ENCODE measurements at regions of chr11 and their contacts with region 1.

Region 1: DNA sequence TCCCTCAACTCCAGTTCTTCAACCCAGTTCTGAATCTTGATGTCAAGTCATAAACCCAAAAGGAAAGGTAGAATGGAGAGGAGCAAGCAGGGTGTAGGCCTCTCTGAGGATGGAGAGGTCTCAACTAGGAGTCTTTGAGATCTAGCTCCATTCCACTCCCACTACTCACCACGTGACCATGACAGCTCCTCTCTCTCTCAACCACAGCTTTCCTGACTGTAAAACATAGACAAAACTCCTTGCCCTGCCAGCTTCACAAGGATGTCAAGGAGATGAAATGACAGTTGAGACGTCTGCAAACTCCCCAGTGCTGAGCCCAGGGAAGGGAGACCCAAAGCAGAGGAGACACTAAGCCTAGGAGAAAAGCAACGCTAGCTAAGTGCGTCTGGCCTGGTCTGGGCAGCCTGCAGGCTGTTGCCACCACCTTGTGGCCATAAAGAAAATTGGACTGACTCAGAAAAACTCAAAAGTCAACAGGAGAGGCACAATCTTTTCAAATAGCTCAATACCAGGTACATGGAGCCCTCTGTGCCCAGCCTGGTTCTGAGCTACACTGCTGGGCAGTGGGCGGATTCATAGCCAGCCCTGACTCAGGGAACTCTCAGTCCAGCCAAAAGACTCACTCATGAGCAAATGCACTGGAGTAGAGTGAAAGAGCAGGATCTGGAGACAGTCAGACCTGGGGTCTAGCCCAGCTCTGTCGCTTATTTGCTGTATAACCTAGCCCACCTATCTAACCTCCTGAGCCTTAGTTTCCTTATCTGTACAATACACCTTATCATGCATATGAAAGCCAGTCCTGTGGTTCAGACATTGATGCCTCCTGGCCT is 3.4 kb downstream of the CLPB start:
- DNase-seq: peak in 4 of 5 donors; percentile 30 to 46 (median 40)
- H3K4me3 ChIP-seq: no peak overlapping the region
- H3K4me3 Mint-ChIP-seq: peak overlapping the region in 7 of 8 donors; percentile 0 to 74 (median 28)
- H3K27ac ChIP-seq: no peak overlapping the region
- H3K27ac Mint-ChIP-seq: peak overlapping the region in 5 of 7 donors; percentile 28 to 64 (median 46)
- H3K4me1 ChIP-seq: peaks cover 26% of the 10 kb centered on the region
- H3K4me1 Mint-ChIP-seq: peaks cover 17 to 42% (median 35%) of the 10 kb centered on the region in 4 donors
- H3K27me3 ChIP-seq: no peaks in the 10 kb centered on the region
- H3K27me3 Mint-ChIP-seq: peaks cover 0 to 1% of the 10 kb centered on the region in 2 donors

Region 2: GRCh38 chr11:71787098-71787823 is 643.7 kb before region 1 on chr11:
- CTCF ChIA-PET with region 1: no interaction called
- POLR2A ChIA-PET with region 1: no interaction called
- intact Hi-C with region 1: loop called (anchors 5 kb)
- DNase-seq: peak; percentile 89 to 97 (median 95)
- H3K4me3 ChIP-seq: peak overlapping the region in 1 of 2 donors; percentile 91
- H3K4me3 Mint-ChIP-seq: peak overlapping the region; percentile 93 to 99 (median 96)
- H3K27ac ChIP-seq: peak overlapping the region; percentile 65
- H3K27ac Mint-ChIP-seq: peak overlapping the region; percentile 87 to 100 (median 99)
- H3K4me1 ChIP-seq: peaks cover 3% of the 10 kb centered on the region
- H3K4me1 Mint-ChIP-seq: peaks cover 10 to 18% (median 13%) of the 10 kb centered on the region in 4 donors
- H3K27me3 ChIP-seq: no peaks in the 10 kb centered on the region
- H3K27me3 Mint-ChIP-seq: no peaks in the 10 kb centered on the region

Region 3: DNA sequence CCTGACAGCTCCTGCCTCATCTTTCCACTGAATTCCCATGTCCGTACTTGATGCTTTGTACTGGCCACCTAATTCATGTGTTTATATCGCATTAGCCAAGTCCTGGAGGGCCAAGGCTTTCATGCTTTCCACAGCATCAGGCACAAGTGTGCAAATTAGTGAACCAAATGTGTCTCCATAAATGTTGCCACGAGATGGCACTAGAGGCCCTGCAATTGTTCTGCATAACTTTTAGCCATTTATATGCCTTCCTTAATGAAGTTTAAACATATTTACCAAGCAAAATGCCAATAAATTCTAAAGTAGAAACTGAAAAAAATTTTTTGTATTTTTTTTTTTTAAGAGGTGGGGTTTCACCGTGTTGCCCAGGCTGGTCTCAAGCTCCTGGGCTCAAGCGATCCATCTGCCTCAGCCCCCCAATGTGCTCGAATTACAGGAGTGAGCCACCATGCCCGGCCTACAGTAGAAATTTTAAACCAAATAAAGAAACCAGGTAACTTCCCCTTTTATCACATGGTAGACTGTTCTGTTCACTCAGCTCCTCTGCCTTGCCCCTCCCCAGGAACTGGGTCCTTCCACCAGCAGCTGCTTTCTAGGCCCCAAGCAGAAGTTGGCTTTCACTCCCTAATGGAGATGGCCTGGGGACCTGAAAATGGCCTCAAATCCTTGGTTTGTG is 453.1 kb before region 1 on chr11:
- CTCF ChIA-PET with region 1: interaction called, 14 read pairs
- POLR2A ChIA-PET with region 1: no interaction called
- intact Hi-C with region 1: loop called (anchors 1 kb)
- DNase-seq: peak in 4 of 5 donors; percentile 33 to 47 (median 44)
- H3K4me3 ChIP-seq: no peak overlapping the region
- H3K4me3 Mint-ChIP-seq: no peak overlapping the region
- H3K27ac ChIP-seq: no peak overlapping the region
- H3K27ac Mint-ChIP-seq: peak overlapping the region in 1 of 7 donors; percentile 77
- H3K4me1 ChIP-seq: no peaks in the 10 kb centered on the region
- H3K4me1 Mint-ChIP-seq: peaks cover 0 to 5% (median 3%) of the 10 kb centered on the region in 4 donors
- H3K27me3 ChIP-seq: no peaks in the 10 kb centered on the region
- H3K27me3 Mint-ChIP-seq: no peaks in the 10 kb centered on the region

Region 4: DNA sequence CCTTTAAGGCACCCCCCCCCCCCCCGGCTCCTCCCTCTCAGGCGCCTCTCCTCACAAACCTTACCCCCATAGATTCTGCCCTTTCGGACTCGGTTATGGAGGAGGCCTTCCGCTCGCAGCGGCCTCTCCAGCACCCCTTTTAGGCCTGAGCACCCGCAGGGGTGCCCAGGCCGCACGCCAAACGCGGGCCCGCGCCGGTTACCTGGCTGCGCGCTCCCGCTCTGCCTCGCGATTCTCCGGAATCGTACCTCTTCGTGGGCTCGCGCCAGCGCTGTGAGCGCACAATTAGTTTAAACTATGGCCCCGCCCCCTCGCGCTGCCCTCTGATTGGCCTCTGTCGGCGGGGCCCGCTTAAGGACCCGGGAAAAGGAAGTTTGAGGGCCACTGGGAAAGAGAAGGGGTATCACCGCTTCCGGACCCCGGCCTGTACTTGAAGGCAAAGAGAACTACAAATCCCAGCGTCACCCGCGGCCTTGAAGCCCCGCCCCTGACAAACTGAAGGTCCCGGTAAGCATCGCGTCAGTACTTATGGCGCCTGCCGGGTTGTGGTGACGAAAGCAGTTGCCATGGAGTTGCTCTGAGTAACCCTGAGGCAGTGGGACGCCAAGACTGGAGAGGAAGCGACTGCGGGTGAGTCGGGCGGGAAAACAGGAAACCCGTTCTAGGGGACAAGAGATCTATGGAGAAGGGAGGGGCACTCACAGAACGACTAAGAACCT is 350.5 kb before region 1 on chr11 and contains the starts of genes LRRC51 and NUMA1:
- CTCF ChIA-PET with region 1: no interaction called
- POLR2A ChIA-PET with region 1: no interaction called
- intact Hi-C with region 1: loop called (anchors 1 kb)
- DNase-seq: peak; percentile 98 to 100 (median 99)
- H3K4me3 ChIP-seq: peak within 1 kb of the TSS; percentile 74 to 79
- H3K4me3 Mint-ChIP-seq: peak within 1 kb of the TSS; percentile 89 to 96 (median 93)
- H3K27ac ChIP-seq: peak within 1 kb of the TSS; percentile 75
- H3K27ac Mint-ChIP-seq: peak within 1 kb of the TSS; percentile 91 to 100 (median 99)
- H3K4me1 ChIP-seq: peaks cover 27% of the 10 kb centered on the region
- H3K4me1 Mint-ChIP-seq: peaks cover 31 to 53% (median 38%) of the 10 kb centered on the region in 4 donors
- H3K27me3 ChIP-seq: no peaks in the 10 kb centered on the region
- H3K27me3 Mint-ChIP-seq: no peaks in the 10 kb centered on the region
- total RNA-seq, gene LRRC51: 4.2 to 4.5 TPM
- total RNA-seq, gene NUMA1: 376 to 380 TPM

Region 5: DNA sequence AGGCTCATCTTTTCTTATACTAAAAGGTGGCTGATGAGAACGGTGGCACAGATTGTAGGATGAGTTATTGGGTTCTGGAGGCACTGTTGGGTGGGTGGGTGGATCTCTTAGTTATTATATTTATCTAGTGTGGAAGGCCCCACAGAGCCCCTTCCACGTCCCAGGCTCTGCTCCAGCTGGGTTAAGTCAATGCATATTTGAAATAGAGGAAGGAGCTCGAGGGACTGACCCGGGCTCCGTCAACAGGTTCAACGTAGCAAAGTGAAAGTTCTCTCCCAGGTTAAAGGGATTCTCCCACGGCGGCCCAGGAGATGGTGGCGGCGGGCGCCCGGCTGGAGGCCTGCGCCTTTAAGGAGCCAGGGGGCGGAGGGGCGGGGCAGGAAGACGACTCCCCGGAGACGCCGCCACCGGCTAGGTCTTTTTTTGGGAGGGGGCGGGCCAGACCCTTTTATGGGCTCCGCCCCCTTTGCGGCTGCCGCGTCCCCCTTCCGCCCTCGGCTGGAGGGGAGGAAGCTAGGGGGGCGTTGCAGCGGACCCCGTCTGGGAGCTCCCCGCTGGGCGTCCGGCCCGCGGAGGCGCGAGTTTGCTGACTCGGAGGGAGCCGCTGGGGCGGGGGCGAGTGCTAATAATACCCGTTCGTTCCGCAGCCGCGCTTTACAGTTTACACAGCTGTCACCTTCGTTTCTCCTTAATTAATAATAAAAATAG is 207.9 kb before region 1 on chr11:
- CTCF ChIA-PET with region 1: interaction called, 4 read pairs
- POLR2A ChIA-PET with region 1: interaction called, 6 read pairs
- intact Hi-C with region 1: loop called (anchors 1 kb)
- DNase-seq: peak; percentile 91 to 95 (median 92)
- H3K4me3 ChIP-seq: peak overlapping the region; percentile 48 to 83
- H3K4me3 Mint-ChIP-seq: peak overlapping the region; percentile 89 to 96 (median 91)
- H3K27ac ChIP-seq: peak overlapping the region; percentile 72
- H3K27ac Mint-ChIP-seq: peak overlapping the region; percentile 89 to 96 (median 95)
- H3K4me1 ChIP-seq: peaks cover 19% of the 10 kb centered on the region
- H3K4me1 Mint-ChIP-seq: peaks cover 8 to 31% (median 19%) of the 10 kb centered on the region in 4 donors
- H3K27me3 ChIP-seq: no peaks in the 10 kb centered on the region
- H3K27me3 Mint-ChIP-seq: peaks cover 0 to 7% of the 10 kb centered on the region in 2 donors

Region 6: GRCh38 chr11:72326151-72326848 is 104.7 kb before region 1 on chr11:
- CTCF ChIA-PET with region 1: no interaction called
- POLR2A ChIA-PET with region 1: no interaction called
- intact Hi-C with region 1: no loop called
- DNase-seq: no peak
- H3K4me3 ChIP-seq: no peak overlapping the region
- H3K4me3 Mint-ChIP-seq: no peak overlapping the region
- H3K27ac ChIP-seq: no peak overlapping the region
- H3K27ac Mint-ChIP-seq: peak overlapping the region in 1 of 7 donors; percentile 72
- H3K4me1 ChIP-seq: no peaks in the 10 kb centered on the region
- H3K4me1 Mint-ChIP-seq: no peaks in the 10 kb centered on the region
- H3K27me3 ChIP-seq: no peaks in the 10 kb centered on the region
- H3K27me3 Mint-ChIP-seq: no peaks in the 10 kb centered on the region

Region 7: GRCh38 chr11:72373163-72373562 is 57.8 kb before region 1 on chr11:
- CTCF ChIA-PET with region 1: no interaction called
- POLR2A ChIA-PET with region 1: no interaction called
- intact Hi-C with region 1: no loop called
- DNase-seq: no peak
- H3K4me3 ChIP-seq: no peak overlapping the region
- H3K4me3 Mint-ChIP-seq: no peak overlapping the region
- H3K27ac ChIP-seq: no peak overlapping the region
- H3K27ac Mint-ChIP-seq: no peak overlapping the region
- H3K4me1 ChIP-seq: no peaks in the 10 kb centered on the region
- H3K4me1 Mint-ChIP-seq: peaks cover 0 to 1% (median 0%) of the 10 kb centered on the region in 4 donors
- H3K27me3 ChIP-seq: no peaks in the 10 kb centered on the region
- H3K27me3 Mint-ChIP-seq: no peaks in the 10 kb centered on the region

Region 8: DNA sequence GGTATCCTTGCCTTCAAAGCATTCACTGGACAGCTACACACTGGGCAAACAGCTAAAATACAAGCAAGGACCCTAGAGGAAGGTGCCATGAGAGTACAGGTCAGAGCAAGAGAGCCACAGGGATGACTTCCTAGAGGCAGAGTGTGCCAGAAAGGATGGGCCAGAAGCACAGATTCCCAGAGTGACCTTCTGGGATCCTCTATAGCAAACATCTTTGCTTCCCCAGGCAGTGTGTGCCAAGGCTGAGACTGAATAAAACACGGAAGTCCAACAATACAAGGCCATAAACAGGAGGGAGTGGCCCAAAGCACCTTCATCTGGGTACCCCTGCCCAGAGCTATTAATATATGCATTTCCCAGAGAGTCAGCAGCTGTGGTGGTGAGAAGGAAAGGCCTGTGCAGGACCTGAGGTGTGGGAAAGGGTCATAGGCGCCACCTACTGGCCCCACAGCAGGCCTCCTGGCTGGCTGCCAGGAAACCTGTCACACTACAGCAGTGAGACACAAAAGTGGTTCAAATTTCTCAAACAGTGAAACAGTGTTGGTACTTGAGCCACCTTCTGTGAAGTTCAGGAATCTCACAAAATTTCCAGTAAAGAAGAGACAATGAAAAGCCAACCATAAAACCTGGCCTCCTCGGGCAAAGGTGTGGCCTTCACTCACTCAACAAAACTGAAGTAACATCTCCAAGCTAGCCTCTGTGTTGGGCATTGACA is 16.9 kb before region 1 on chr11:
- CTCF ChIA-PET with region 1: interaction called, 30 read pairs
- POLR2A ChIA-PET with region 1: no interaction called
- intact Hi-C with region 1: no loop called
- DNase-seq: peak; percentile 62 to 68 (median 63)
- H3K4me3 ChIP-seq: no peak overlapping the region
- H3K4me3 Mint-ChIP-seq: no peak overlapping the region
- H3K27ac ChIP-seq: no peak overlapping the region
- H3K27ac Mint-ChIP-seq: no peak overlapping the region
- H3K4me1 ChIP-seq: peaks cover under 1% of the 10 kb centered on the region
- H3K4me1 Mint-ChIP-seq: peaks cover 4 to 17% (median 9%) of the 10 kb centered on the region in 4 donors
- H3K27me3 ChIP-seq: no peaks in the 10 kb centered on the region
- H3K27me3 Mint-ChIP-seq: no peaks in the 10 kb centered on the region

Measured in CD4-positive, alpha-beta memory T cell (primary cell).